ENCODE measurements at regions of chr3 and their contacts with region 1.

Region 1: DNA sequence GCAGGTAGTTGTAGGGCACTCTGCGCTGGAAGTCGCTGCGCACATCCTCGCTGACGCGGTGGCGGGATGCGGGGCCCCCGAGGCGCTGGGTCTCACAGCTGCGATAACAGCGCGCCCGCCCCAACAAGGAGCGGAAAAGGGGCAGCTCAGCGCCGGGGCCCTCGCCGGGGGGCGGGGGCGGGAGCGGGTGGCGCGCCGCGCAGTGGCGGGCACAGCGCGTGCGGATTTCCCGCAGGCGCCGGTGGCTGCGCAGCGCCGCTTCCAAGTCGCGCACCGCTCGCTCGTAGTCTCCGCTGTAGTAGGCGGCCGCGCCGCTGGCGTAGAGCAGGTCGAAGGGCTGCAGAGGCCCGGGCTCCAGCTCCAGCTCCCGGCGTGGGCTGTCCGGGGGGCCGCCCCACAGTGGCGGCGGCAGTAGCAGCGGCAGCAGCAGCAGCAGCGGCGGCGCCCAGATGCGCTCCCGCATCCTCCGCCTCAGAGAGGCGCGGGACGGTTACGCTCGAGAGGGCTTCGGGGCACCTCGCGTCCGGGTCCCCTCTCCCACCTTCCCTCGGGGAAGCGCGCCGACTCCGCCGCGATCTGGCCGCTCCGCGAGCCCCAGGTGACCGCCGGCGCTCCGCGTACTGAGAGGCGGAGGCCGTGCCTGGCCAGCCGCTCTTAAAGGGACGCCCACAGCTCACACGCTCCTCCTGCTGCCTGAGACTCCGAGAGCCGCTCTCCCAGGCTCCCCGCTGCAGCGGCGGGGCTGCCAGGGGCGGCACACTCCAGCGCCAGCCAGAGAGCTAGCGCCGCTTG is at the start of gene P3H2:
- DNase-seq: peak; percentile 86
- total RNA-seq, gene P3H2: 17.7 TPM

Region 2: GRCh38 chr3:189975391-189975990 is 145.0 kb before region 1 on chr3:
- intact Hi-C with region 1: loop called (anchors 5 kb)
- DNase-seq: no peak

Region 3: GRCh38 chr3:190155752-190156151 is 35.3 kb after region 1 on chr3:
- intact Hi-C with region 1: no loop called
- DNase-seq: no peak

Region 4: GRCh38 chr3:191253089-191253799 is 1132.8 kb after region 1 on chr3:
- intact Hi-C with region 1: no loop called
- DNase-seq: no peak

Measured in cardiac septum (tissue), 1 donor.